Calu3 (cell line): ENCODE measurements at regions of chr17 and their contacts with region 1.

Region 1: GRCh38 chr17:63621766-63622519 is at the start of gene MAP3K3:
- DNase-seq: peak; percentile 94
- H3K4me3 Mint-ChIP-seq: peak within 1 kb of the TSS; percentile 88
- H3K27ac Mint-ChIP-seq: peak within 1 kb of the TSS; percentile 66
- H3K4me1 Mint-ChIP-seq: peaks cover 18% of the 10 kb centered on the region
- H3K27me3 Mint-ChIP-seq: peaks cover 14% of the 10 kb centered on the region
- CTCF ChIP-seq: no peak
- total RNA-seq, gene MAP3K3: 10.0 and 11.4 TPM in 2 replicates

Region 2: DNA sequence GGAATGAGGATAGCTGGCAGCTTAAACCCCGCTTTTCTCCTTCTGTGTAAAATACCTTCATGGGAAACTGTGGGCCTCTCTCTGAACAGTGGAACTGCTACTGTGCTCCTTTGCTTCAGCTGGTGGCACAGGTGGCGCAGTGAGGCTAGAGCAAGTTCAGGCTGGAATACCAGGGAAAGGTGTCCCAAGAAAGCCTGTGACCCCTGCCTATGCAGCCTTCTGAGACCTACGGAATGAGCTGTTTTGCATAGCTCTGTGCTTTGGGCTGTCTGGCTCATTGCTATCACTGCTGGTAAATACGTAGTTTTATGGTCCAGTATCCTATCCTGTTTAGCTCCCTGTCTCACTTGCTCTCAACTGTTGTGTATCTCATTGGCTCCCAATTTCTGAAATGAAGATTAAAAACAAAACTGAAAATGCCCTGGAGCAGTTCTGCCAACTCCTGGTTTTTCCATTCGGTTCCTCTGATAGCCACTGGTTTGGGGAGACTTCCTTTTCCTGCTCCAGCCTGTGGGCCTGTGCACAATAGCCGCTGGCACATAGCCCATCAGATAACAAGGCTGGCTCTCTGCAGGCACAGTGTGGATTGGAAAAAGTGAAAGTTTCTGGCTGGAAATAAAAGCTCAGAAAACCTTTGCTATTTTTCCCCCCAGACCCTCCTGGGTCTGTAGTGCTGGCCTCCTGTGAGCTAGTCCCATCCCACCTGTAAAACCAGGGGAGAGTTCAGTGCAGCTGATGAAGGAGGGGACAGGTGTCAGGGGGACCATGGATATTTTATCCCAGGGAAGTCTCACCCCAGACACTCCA is 53.9 kb after region 1 on chr17:
- CTCF ChIA-PET with region 1: interaction called, 3 read pairs
- intact Hi-C with region 1: loop called (anchors 10 kb)
- DNase-seq: peak; percentile 73
- H3K4me3 Mint-ChIP-seq: peak overlapping the region; percentile 66
- H3K27ac Mint-ChIP-seq: peak overlapping the region; percentile 87
- H3K4me1 Mint-ChIP-seq: peaks cover 22% of the 10 kb centered on the region
- H3K27me3 Mint-ChIP-seq: no peaks in the 10 kb centered on the region
- CTCF ChIP-seq: no peak

Region 3: DNA sequence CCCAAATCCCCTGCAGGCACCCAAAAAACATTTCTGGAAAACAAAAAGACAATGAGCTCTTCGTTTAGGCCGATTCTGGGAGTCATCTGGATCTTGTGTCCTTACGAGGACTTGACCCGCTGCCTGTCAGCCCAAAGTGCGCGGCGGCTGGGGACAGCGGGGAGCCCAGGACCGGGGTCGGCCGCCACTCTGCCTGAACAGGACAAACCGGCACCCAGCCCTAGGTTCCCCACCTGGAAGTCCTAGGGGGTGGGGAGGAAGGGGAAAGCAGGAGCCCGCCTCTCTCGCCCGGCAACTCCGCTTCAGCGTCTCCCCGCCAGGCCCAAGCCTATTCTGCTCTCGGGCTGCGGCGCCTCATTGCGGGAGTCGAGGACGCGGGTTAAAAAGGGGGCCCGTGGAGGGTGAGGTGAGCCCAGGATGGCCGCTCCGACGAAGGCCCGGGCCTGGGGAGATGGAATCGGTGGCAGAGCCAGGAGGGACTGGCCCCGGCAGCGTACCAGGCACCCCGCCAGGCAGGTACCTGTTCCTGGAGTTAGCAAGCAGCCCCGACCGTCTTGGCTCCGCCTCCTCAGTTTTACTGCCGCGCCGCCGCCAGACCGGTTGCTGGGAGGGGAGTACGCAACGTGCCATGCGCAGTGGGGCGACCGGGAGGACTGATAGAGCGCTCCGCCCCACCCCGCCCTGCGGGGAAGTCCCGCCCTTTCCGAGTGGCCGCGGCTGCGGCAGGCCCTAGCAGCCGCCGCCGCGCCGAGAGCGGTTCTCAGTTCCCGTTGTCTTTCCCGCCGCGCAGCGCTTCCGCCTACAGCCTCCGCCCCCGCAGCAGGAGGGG is 119.5 kb after region 1 on chr17 and contains the start of gene STRADA:
- CTCF ChIA-PET with region 1: no interaction called
- intact Hi-C with region 1: loop called (anchors 10 kb)
- DNase-seq: peak; percentile 97
- H3K4me3 Mint-ChIP-seq: peak within 1 kb of the TSS; percentile 84
- H3K27ac Mint-ChIP-seq: peak within 1 kb of the TSS; percentile 74
- H3K4me1 Mint-ChIP-seq: no peaks in the 10 kb centered on the region
- H3K27me3 Mint-ChIP-seq: no peaks in the 10 kb centered on the region
- CTCF ChIP-seq: no peak
- total RNA-seq, gene STRADA: 18.1 and 18.2 TPM in 2 replicates